Stomach (tissue), 19 donors: ENCODE measurements at regions of chr16 and their contacts with region 1.

Region 1: GRCh38 chr16:48623304-48624016 is 13.5 kb upstream of the N4BP1 start:
- DNase-seq: peak; percentile 88 to 93
- H3K4me3 ChIP-seq: peak overlapping the region; percentile 40 to 47 (median 44)
- H3K27ac ChIP-seq: peak overlapping the region in 4 of 5 donors; percentile 27 to 87 (median 76)
- H3K4me1 ChIP-seq: peaks cover 10 to 28% (median 24%) of the 10 kb centered on the region in 4 donors
- H3K27me3 ChIP-seq: no peaks in the 10 kb centered on the region
- CTCF ChIP-seq: peak in 6 of 7 experiments; percentile 39 to 98 (median 94)
- EP300 ChIP-seq: no peak
- POLR2A ChIP-seq: no peak

Region 2: GRCh38 chr16:48353565-48354163 is 269.8 kb before region 1 on chr16:
- intact Hi-C with region 1: loop called (anchors 5 kb)
- DNase-seq: peak; percentile 63 to 89
- H3K4me3 ChIP-seq: no peak overlapping the region
- H3K27ac ChIP-seq: no peak overlapping the region
- H3K4me1 ChIP-seq: peaks cover 0 to 24% (median 4%) of the 10 kb centered on the region in 4 donors
- H3K27me3 ChIP-seq: no peaks in the 10 kb centered on the region
- CTCF ChIP-seq: peak in 6 of 7 experiments; percentile 15 to 96 (median 80)
- EP300 ChIP-seq: no peak
- POLR2A ChIP-seq: no peak

Region 3: GRCh38 chr16:48499923-48500381 is 123.5 kb before region 1 on chr16:
- intact Hi-C with region 1: no loop called
- DNase-seq: peak in 1 of 2 donors; percentile 93
- H3K4me3 ChIP-seq: no peak overlapping the region
- H3K27ac ChIP-seq: peak overlapping the region in 4 of 5 donors; percentile 41 to 74 (median 60)
- H3K4me1 ChIP-seq: peaks cover 0 to 44% (median 25%) of the 10 kb centered on the region in 4 donors
- H3K27me3 ChIP-seq: no peaks in the 10 kb centered on the region
- CTCF ChIP-seq: no peak
- EP300 ChIP-seq: no peak
- POLR2A ChIP-seq: no peak

Region 4: GRCh38 chr16:48687421-48688038 is 64.1 kb after region 1 on chr16:
- intact Hi-C with region 1: no loop called
- DNase-seq: peak; percentile 28 to 83
- H3K4me3 ChIP-seq: no peak overlapping the region
- H3K27ac ChIP-seq: no peak overlapping the region
- H3K4me1 ChIP-seq: peaks cover 0 to 6% (median 0%) of the 10 kb centered on the region in 4 donors
- H3K27me3 ChIP-seq: peaks cover 0 to 11% (median 0%) of the 10 kb centered on the region in 3 donors
- CTCF ChIP-seq: peak in 5 of 7 experiments; percentile 26 to 71 (median 52)
- EP300 ChIP-seq: no peak
- POLR2A ChIP-seq: no peak